ENCODE measurements at regions of chr16 and their contacts with region 1.

Region 1: GRCh38 chr16:79845033-79845733 is 244.6 kb upstream of the MAF start:
- DNase-seq: no peak
- H3K4me3 Mint-ChIP-seq: peak overlapping the region; percentile 39
- H3K27ac Mint-ChIP-seq: peak overlapping the region; percentile 82
- H3K4me1 Mint-ChIP-seq: peaks cover 38% of the 10 kb centered on the region
- H3K27me3 Mint-ChIP-seq: peaks cover 2% of the 10 kb centered on the region

Region 2: GRCh38 chr16:78770353-78771091 is 1074.7 kb before region 1 on chr16:
- intact Hi-C with region 1: loop called (anchors 10 kb)
- DNase-seq: peak; percentile 62
- H3K4me3 Mint-ChIP-seq: no peak overlapping the region
- H3K27ac Mint-ChIP-seq: peak overlapping the region; percentile 2
- H3K4me1 Mint-ChIP-seq: peaks cover 35% of the 10 kb centered on the region
- H3K27me3 Mint-ChIP-seq: peaks cover 7% of the 10 kb centered on the region

Region 3: GRCh38 chr16:79618692-79619050 is 226.5 kb before region 1 on chr16:
- intact Hi-C with region 1: loop called (anchors 5 kb)
- DNase-seq: peak; percentile 21
- H3K4me3 Mint-ChIP-seq: peak overlapping the region; percentile 54
- H3K27ac Mint-ChIP-seq: peak overlapping the region; percentile 86
- H3K4me1 Mint-ChIP-seq: peaks cover 60% of the 10 kb centered on the region
- H3K27me3 Mint-ChIP-seq: peaks cover 20% of the 10 kb centered on the region

Region 4: DNA sequence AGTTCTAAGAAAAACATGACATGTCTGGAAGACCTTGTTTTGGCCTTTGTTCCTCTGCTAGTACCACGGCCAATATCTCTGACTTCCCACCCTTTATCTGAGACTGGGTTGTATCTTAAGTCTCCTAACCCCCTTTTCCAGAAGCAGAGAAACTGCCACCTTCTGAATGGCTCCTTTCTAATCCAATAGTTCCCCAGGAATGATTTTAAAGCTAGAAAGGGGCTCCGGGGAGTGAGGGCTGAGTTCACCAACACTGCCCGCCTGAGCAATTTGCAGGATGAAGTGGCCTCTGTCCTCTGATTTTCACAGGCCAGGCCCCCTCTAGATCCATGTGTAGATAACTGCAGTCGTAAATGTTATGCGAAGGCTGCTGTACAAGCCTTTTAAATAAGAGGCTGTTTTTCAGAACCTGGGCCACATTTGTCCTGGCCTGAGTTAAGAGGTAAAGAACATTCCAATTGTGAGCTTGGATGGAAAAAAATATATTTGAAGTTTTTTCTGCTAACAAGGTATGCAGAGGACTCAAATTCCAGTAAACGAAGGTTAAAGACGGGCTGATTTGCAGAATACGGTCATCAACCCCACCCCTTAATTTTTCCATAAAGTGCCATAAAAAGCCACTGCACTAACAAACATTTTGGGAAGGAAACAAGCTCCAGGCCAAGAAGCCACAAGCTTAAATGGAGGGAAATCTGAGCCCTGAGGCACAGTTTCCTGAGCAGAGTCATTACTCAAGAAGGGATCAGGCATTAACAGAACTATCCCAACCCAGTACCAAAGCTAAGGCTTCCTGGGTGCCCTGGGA is 127.6 kb before region 1 on chr16:
- intact Hi-C with region 1: loop called (anchors 2 kb)
- DNase-seq: no peak
- H3K4me3 Mint-ChIP-seq: peak overlapping the region; percentile 47
- H3K27ac Mint-ChIP-seq: peak overlapping the region; percentile 63
- H3K4me1 Mint-ChIP-seq: peaks cover 40% of the 10 kb centered on the region
- H3K27me3 Mint-ChIP-seq: peaks cover 7% of the 10 kb centered on the region

Region 5: DNA sequence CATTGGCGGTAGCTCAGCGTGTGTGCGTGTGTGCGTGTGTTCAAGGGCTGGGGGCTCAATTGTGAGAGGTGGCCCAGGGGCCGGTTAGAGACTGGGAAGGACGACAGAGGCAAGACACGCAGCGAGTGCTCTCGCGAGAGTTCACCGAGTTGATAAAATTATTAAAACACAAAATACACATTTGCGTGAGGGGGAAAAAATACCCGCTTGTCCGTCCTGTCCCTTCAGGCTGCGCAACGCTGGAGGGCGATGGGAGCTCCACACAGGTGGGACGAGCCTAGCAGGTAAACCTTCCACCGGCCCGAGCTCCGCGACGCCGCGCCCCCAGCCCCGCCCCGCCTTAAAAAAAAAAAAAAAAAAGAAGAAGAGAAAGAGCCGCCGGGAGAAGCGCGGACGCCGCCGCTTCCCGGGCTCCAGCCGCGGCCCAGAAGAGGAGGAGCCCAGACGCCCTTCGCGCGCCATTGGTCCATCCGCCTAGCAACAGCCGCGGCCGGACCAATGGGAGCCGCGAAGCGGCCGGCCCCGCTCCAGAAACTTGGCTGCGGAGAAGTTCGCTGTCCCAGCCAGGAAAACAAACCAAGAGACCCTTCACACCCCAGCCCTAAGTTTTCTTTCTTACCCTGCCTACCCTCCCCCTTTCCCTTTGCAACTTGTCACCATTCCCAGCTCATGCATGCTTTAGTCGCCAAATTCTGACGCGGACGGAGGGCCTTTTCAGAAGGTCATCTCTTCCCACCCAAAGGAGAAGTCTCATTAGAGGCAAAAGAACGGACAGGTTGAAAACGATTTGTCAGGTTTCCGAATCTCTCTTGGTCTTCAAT is 74.7 kb before region 1 on chr16:
- intact Hi-C with region 1: loop called (anchors 5 kb)
- DNase-seq: peak; percentile 70
- H3K4me3 Mint-ChIP-seq: peak overlapping the region; percentile 85
- H3K27ac Mint-ChIP-seq: peak overlapping the region; percentile 82
- H3K4me1 Mint-ChIP-seq: peaks cover 26% of the 10 kb centered on the region
- H3K27me3 Mint-ChIP-seq: peaks cover 18% of the 10 kb centered on the region

Measured in activated T-helper 2 cell treated with anti-CD3 and anti-CD28 coated beads, Interferon-gamma antibody, Interleukin-2, Interleukin-4, amounts not matched to agents 10 μg/mL and 5 μg/mL and 100 μg/mL, durations not matched to agents 14 hours and 24 hours and 36 hours (primary cell).